Heart left ventricle (tissue), 16 donors: ENCODE measurements at regions of chr7 and their contacts with region 1.

Region 1: GRCh38 chr7:48505051-48505450 is 333.8 kb downstream of the ABCA13 start:
- DNase-seq: no peak
- ATAC-seq: no peak
- H3K4me3 ChIP-seq: no peak overlapping the region
- H3K27ac ChIP-seq: no peak overlapping the region
- H3K4me1 ChIP-seq: no peaks in the 10 kb centered on the region
- H3K27me3 ChIP-seq: no peaks in the 10 kb centered on the region
- CTCF ChIP-seq: no peak
- POLR2A ChIP-seq: no peak

Region 2: GRCh38 chr7:48781783-48782182 is 276.7 kb after region 1 on chr7:
- intact Hi-C with region 1: loop called in 1 of 10 experiments (anchors 5 kb)
- DNase-seq: no peak
- ATAC-seq: no peak
- H3K4me3 ChIP-seq: no peak overlapping the region
- H3K27ac ChIP-seq: no peak overlapping the region
- H3K4me1 ChIP-seq: no peaks in the 10 kb centered on the region
- H3K27me3 ChIP-seq: peaks cover 0 to 14% (median 0%) of the 10 kb centered on the region in 9 donors
- CTCF ChIP-seq: no peak
- POLR2A ChIP-seq: no peak

Region 3: GRCh38 chr7:48959676-48960075 is 454.6 kb after region 1 on chr7:
- intact Hi-C with region 1: no loop called
- DNase-seq: no peak
- ATAC-seq: no peak
- H3K4me3 ChIP-seq: no peak overlapping the region
- H3K27ac ChIP-seq: no peak overlapping the region
- H3K4me1 ChIP-seq: peaks cover 0 to 13% (median 0%) of the 10 kb centered on the region in 12 donors
- H3K27me3 ChIP-seq: no peaks in the 10 kb centered on the region
- CTCF ChIP-seq: no peak
- POLR2A ChIP-seq: no peak